Heart right ventricle (tissue), 16 donors: ENCODE measurements at regions of chr3 and their contacts with region 1.

Region 1: GRCh38 chr3:107938143-107938542 is 152.7 kb downstream of the CD47 start:
- DNase-seq: peak in 1 of 2 donors; percentile 13
- ATAC-seq: peak in 3 of 8 donors; percentile 39 to 51 (median 42)
- H3K4me3 ChIP-seq: no peak overlapping the region
- H3K27ac ChIP-seq: no peak overlapping the region
- H3K4me1 ChIP-seq: peaks cover 0 to 11% (median 0%) of the 10 kb centered on the region in 9 donors
- H3K27me3 ChIP-seq: no peaks in the 10 kb centered on the region
- CTCF ChIP-seq: peak in 8 of 9 donors; percentile 23 to 66 (median 56)

Region 2: DNA sequence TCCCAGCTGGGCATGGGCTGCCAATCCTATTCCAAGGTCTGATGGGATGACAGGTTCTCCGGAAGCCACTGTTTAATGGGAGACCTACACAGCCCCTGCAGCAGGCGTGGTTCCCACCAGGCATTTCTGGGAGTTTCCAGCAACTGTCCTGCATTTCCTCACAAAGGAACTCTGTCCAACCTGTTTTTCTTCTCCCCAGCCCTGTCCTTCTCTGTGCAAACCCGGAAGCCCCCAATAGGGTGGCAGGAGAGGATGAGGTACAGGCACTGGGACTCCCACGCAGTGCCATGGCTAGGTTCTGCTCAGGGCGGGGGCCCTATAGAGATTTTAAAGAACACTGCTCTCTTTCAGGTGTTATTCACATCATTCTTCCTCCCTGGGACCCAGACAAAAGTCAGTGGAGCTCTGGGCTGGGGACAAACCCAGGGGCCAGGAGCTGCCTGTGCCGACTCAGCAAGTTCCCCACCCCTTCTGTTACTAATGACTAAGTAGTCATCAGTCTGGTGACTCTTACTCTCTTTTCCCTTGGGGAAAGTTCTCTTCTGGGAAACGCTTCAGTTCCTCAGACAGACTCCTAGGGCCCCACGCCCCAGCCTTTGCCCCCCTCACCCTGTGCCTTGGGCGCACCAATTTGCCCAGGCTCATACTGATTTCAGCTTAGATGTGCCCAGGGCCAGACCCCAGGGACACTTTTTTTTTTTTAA is 55.0 kb after region 1 on chr3:
- intact Hi-C with region 1: no loop called
- DNase-seq: no peak
- ATAC-seq: peak in 2 of 8 donors; percentile 17 to 41
- H3K4me3 ChIP-seq: no peak overlapping the region
- H3K27ac ChIP-seq: peak overlapping the region in 1 of 10 donors; percentile 45
- H3K4me1 ChIP-seq: peaks cover 0 to 41% (median 9%) of the 10 kb centered on the region in 9 donors
- H3K27me3 ChIP-seq: no peaks in the 10 kb centered on the region
- CTCF ChIP-seq: no peak

Region 3: GRCh38 chr3:108090701-108091451 is 152.7 kb after region 1 on chr3 and contains the start of gene CD47:
- intact Hi-C with region 1: loop called in 1 of 10 experiments (anchors 10 kb)
- DNase-seq: peak; percentile 94 to 98
- ATAC-seq: peak; percentile 92 to 98 (median 96)
- H3K4me3 ChIP-seq: peak within 1 kb of the TSS; percentile 73 to 97 (median 94)
- H3K27ac ChIP-seq: peak within 1 kb of the TSS; percentile 19 to 99 (median 92)
- H3K4me1 ChIP-seq: peaks cover 0 to 47% (median 32%) of the 10 kb centered on the region in 9 donors
- H3K27me3 ChIP-seq: no peaks in the 10 kb centered on the region
- CTCF ChIP-seq: peak in 1 of 9 donors; percentile 11
- total RNA-seq, gene CD47: 36.3 to 76.3 (median 51.2) TPM

Region 4: DNA sequence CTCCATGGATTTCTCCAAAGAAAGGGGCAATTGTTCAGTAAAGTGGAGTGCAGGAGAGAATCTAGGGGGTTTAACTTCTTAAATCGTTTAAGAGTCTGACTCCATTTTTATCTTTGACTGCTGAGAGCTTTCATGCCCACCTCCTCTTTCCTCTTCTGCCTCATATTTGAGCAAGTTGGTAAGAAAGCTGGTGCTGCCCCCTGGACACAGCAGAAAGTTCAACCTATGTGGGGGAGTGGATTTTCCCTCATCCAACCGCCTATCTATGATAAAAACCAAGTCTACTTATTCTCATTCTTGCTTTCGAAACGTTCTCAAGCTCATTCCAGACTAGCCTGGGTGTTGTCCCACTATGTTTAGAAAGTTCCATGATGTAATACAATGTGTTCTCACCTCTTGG is 384.2 kb after region 1 on chr3:
- intact Hi-C with region 1: loop called in 2 of 10 experiments (anchors 5 to 10 kb)
- DNase-seq: no peak
- ATAC-seq: no peak
- H3K4me3 ChIP-seq: no peak overlapping the region
- H3K27ac ChIP-seq: no peak overlapping the region
- H3K4me1 ChIP-seq: no peaks in the 10 kb centered on the region
- H3K27me3 ChIP-seq: peaks cover 0 to 17% (median 0%) of the 10 kb centered on the region in 7 donors
- CTCF ChIP-seq: peak in 4 of 9 donors; percentile 12 to 25 (median 20)

Region 5: GRCh38 chr3:108406661-108407206 is 468.6 kb after region 1 on chr3:
- intact Hi-C with region 1: loop called in 5 of 10 experiments (anchors 2 to 10 kb)
- DNase-seq: no peak
- ATAC-seq: peak in 6 of 8 donors; percentile 63 to 85 (median 75)
- H3K4me3 ChIP-seq: no peak overlapping the region
- H3K27ac ChIP-seq: no peak overlapping the region
- H3K4me1 ChIP-seq: peaks cover 0 to 7% (median 0%) of the 10 kb centered on the region in 9 donors
- H3K27me3 ChIP-seq: peaks cover 0 to 3% (median 0%) of the 10 kb centered on the region in 7 donors
- CTCF ChIP-seq: peak; percentile 31 to 70 (median 57)

Region 6: DNA sequence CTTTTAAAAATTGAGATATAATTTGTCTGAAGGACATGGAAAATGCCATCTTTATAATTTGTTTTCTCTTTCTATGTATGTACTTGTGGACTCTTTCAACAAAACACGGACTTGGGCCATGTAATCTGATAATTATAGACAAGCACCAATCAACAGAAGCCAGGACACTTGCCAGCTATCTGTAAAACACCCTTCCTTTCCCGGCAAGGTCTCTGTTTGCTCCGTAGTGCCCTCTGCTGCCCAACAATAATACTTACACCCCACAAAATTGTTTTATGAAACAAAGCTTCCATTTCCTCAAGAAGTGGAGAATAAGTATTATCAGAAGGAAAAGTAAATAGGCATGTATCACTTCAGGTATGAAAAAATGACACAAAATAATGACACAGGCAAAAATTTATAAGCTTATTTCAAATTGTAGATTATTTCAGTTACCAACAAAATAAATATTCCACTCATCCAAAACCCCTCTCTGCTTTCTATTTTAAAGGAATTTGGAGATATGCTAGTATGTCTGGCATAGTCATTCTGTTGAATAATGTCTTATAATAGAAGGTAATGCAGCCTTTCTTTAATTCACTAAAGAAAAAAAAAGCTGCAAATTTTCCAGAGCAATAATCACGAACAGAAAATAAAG is 539.5 kb after region 1 on chr3:
- intact Hi-C with region 1: loop called in 4 of 10 experiments (anchors 5 to 10 kb)
- DNase-seq: peak; percentile 14 to 31
- ATAC-seq: peak in 4 of 8 donors; percentile 38 to 77 (median 60)
- H3K4me3 ChIP-seq: no peak overlapping the region
- H3K27ac ChIP-seq: no peak overlapping the region
- H3K4me1 ChIP-seq: peaks cover 0 to 7% (median 0%) of the 10 kb centered on the region in 9 donors
- H3K27me3 ChIP-seq: no peaks in the 10 kb centered on the region
- CTCF ChIP-seq: peak in 8 of 9 donors; percentile 50 to 80 (median 74)